ENCODE measurements at regions of chr13 and their contacts with region 1.

Region 1: DNA sequence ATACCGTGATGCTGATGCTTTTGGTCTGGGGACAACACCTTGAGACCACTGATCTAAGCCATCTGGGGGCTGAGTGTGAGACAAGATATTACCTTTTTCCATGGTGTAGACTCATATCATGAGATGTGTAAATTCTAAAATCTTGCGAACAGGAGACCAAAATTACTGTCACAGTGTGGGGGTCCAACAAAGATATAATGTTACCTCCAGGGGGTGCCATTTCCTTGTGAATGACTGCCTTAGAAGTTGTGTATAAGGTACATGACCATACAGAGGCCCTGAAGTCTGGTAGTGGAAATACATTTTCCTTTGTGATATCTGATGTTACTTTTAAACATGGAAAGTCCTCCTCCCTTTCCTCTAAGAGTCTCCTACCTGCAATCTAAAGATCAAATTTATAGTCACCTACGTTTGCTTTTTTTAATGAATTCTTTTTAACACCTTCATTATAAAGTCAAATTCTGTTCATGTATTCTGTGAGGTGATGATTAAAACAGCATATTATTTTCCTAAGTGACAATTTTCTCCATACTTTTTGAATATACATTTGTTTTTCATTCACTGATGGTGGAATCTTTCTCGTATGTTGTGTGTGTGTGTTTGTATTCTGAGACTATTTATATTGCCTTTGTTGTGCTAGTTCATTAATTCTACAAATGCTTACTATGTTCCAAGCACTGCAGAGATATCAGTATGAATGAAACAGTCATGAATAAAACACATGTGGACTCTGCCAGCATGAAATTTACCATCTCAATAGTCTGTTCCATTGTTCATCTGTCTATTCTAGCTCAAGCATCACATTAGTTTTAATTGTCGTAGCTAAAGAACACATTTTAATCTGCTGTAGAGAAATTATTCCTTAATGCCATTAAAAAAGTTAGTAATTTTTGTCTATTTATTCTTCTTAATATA is 113.7 kb downstream of the RFC3 start:
- DNase-seq: peak; percentile 73
- H3K4me3 ChIP-seq: no peak overlapping the region
- H3K27ac ChIP-seq: no peak overlapping the region
- H3K4me1 ChIP-seq: no peaks in the 10 kb centered on the region
- CTCF ChIP-seq: peak; percentile 85

Region 2: DNA sequence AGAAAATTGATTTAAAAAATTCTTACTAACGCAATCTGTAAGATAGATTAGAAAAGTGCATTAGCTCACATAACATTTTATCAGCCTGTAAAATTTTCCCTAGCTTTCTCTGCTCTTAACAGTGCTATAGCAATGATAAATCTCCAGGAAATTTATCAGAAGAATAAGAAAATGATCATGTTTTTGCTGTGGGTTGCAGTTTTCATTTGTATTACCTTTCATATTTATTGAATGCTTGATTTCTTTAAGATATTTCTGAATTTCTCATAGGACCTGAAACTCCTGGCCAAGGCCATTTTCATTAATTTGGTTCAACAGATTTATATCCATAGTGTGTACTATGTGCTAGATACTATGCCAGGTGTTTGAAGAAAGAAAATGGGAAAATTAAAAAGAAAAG is 515.8 kb before region 1 on chr13:
- CTCF ChIA-PET with region 1: no interaction called
- POLR2A ChIA-PET with region 1: no interaction called
- intact Hi-C with region 1: no loop called
- DNase-seq: no peak
- H3K4me3 ChIP-seq: no peak overlapping the region
- H3K27ac ChIP-seq: no peak overlapping the region
- H3K4me1 ChIP-seq: no peaks in the 10 kb centered on the region
- CTCF ChIP-seq: no peak

Region 3: GRCh38 chr13:33918199-33918932 is 13.3 kb before region 1 on chr13:
- CTCF ChIA-PET with region 1: no interaction called
- POLR2A ChIA-PET with region 1: interaction called, 19 read pairs
- intact Hi-C with region 1: no loop called
- DNase-seq: no peak
- H3K4me3 ChIP-seq: no peak overlapping the region
- H3K27ac ChIP-seq: no peak overlapping the region
- H3K4me1 ChIP-seq: no peaks in the 10 kb centered on the region
- CTCF ChIP-seq: no peak

Region 4: DNA sequence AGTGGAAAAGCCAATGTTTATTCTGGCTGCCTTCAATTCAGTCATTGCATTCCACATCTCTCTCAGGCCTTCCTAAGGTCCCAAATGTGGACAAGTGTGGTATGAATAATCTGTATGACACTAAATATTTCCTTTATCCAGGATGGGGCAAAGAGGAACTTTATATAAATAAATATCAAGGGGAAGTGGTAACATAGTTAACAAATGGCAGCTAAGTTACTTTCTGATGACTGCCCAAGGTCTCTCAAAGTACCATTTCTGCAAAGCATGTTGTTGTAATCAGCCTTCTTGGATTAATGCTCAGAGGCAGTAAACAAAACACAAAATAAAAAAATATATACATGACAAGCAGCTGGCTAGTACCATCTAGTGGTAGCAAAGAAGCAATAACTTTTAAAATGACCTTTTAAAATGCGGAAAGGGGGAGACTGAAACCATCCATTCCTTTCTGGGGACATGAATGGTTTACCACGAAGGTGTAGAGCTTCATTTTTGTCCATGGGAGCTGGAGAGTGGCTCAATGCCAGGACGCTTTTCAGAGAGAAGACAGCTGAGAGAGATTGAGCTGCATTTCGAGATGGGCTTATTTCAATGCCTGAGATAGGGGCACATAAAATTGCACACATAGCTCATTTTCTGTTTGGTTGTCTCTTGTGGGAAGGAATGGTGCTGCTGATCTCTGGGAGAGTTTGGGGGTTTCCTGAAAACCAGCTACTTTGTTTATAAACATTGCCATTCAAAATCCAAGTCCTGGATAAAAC is 145.5 kb after region 1 on chr13:
- CTCF ChIA-PET with region 1: interaction called, 3 read pairs
- POLR2A ChIA-PET with region 1: interaction called, 8 read pairs
- intact Hi-C with region 1: loop called (anchors 1 kb)
- DNase-seq: peak; percentile 62
- H3K4me3 ChIP-seq: no peak overlapping the region
- H3K27ac ChIP-seq: no peak overlapping the region
- H3K4me1 ChIP-seq: peaks cover 9% of the 10 kb centered on the region
- CTCF ChIP-seq: peak; percentile 93

Region 5: DNA sequence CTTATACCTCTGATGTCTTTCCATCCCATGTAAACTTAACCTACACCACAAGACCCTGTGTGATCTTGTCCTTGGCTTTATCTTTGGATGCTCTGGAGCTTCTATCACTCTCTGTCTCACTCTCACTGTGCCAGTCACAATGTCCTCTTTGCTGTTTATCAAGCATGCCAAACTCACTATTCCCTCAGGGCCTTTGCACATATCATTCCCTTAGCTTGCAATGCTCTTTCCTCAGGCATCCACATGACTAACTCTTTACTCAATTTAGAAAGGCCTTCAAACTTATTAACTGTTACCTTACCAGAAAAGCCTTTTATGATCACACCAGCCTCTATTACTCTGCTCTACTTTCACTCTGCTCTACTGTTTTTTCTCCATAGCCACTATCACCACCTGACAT is 240.4 kb after region 1 on chr13:
- CTCF ChIA-PET with region 1: no interaction called
- POLR2A ChIA-PET with region 1: no interaction called
- intact Hi-C with region 1: no loop called
- DNase-seq: no peak
- H3K4me3 ChIP-seq: no peak overlapping the region
- H3K27ac ChIP-seq: no peak overlapping the region
- H3K4me1 ChIP-seq: no peaks in the 10 kb centered on the region
- CTCF ChIP-seq: no peak

Measured in OCI-LY7 (cell line).